ENCODE measurements at regions of chr9 and their contacts with region 1.

Region 1: GRCh38 chr9:86948074-86948929 is 996 bp upstream of the GAS1 start:
- DNase-seq: peak; percentile 88 to 93
- ATAC-seq: peak; percentile 80
- H3K4me3 ChIP-seq: peak overlapping the region; percentile 55 to 99
- H3K27ac ChIP-seq: peak overlapping the region in 1 of 2 donors; percentile 61
- H3K4me1 ChIP-seq: no peaks in the 10 kb centered on the region
- H3K27me3 ChIP-seq: no peaks in the 10 kb centered on the region

Region 2: GRCh38 chr9:86486891-86487837 is 461.1 kb before region 1 on chr9:
- intact Hi-C with region 1: loop called (anchors 5 to 10 kb)
- DNase-seq: no peak
- ATAC-seq: peak; percentile 79
- H3K4me3 ChIP-seq: no peak overlapping the region
- H3K27ac ChIP-seq: no peak overlapping the region
- H3K4me1 ChIP-seq: no peaks in the 10 kb centered on the region
- H3K27me3 ChIP-seq: no peaks in the 10 kb centered on the region

Region 3: GRCh38 chr9:86732514-86733171 is 215.7 kb before region 1 on chr9:
- intact Hi-C with region 1: loop called in 1 of 2 experiments (anchors 10 kb)
- DNase-seq: no peak
- ATAC-seq: peak; percentile 80
- H3K4me3 ChIP-seq: no peak overlapping the region
- H3K27ac ChIP-seq: no peak overlapping the region
- H3K4me1 ChIP-seq: peaks cover 0 to 5% of the 10 kb centered on the region in 2 donors
- H3K27me3 ChIP-seq: no peaks in the 10 kb centered on the region

Region 4: DNA sequence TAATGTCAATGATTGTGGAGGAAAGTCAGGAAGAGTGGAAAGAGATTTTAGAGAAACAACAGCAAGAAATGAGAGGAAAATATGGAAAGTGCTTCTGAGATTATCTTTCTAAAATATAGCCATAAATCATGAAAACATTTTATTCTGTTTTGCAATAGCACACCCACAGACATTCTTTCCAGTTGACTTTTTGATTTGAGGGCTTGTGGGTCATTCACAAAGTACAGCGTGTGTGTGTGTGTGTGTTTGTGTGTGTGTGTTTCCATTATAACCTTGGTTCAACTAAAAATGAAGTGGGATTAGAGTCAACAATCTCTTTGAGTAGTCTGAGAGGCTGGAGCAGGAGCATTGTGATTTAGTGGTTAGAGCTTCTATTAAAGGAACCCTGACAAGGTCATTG is 115.6 kb after region 1 on chr9:
- intact Hi-C with region 1: loop called in 1 of 2 experiments (anchors 5 kb)
- DNase-seq: peak in 1 of 2 donors; percentile 53
- ATAC-seq: peak; percentile 79
- H3K4me3 ChIP-seq: no peak overlapping the region
- H3K27ac ChIP-seq: peak overlapping the region in 1 of 2 donors; percentile 47
- H3K4me1 ChIP-seq: peaks cover 0 to 3% of the 10 kb centered on the region in 2 donors
- H3K27me3 ChIP-seq: no peaks in the 10 kb centered on the region

Region 5: DNA sequence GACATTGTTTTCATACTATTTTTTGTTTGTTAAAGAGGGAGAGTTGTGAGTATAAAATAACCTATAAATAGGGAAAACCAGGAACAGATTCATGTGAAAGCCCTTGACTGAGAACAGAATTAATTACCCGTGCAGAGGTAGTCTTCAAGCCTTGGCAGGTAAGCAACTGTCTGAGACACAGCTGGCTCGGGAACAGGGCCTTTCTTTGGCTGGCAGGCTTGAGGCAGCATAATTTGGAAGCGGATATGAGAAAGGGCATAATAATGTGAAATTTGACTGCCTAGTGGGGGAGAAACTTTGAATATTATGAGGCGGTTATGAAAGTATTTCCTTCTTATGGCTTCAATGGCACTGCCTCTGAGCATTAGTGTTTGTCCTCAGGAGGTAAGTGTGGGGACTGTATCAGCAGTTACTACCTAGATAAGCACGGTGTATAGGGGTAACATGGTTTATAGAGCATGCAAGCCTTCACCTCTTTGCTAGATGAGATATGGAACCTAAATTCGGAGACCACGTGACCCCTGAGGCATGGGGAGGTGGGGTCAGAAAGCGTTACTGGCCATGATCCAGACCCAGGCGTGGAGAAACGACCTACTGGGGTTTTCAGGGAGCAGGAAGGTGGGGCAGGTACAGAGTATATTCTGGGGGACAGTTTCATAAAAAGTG is 209.2 kb after region 1 on chr9:
- intact Hi-C with region 1: loop called in 1 of 2 experiments (anchors 10 kb)
- DNase-seq: no peak
- ATAC-seq: no peak
- H3K4me3 ChIP-seq: no peak overlapping the region
- H3K27ac ChIP-seq: peak overlapping the region in 1 of 2 donors; percentile 55
- H3K4me1 ChIP-seq: peaks cover 0 to 4% of the 10 kb centered on the region in 2 donors
- H3K27me3 ChIP-seq: no peaks in the 10 kb centered on the region